ENCODE measurements at regions of chr6 and their contacts with region 1.

Region 1: GRCh38 chr6:131627724-131628682 is at the start of gene MED23:
- DNase-seq: peak; percentile 85 to 98 (median 94)
- ATAC-seq: peak; percentile 99
- H3K4me3 ChIP-seq: peak within 1 kb of the TSS; percentile 92
- H3K4me3 Mint-ChIP-seq: peak within 1 kb of the TSS; percentile 95 to 100 (median 98)
- H3K27ac ChIP-seq: peak within 1 kb of the TSS; percentile 75
- H3K27ac Mint-ChIP-seq: peak within 1 kb of the TSS; percentile 93 to 96 (median 95)
- H3K4me1 ChIP-seq: peaks cover 16 to 18% of the 10 kb centered on the region in 2 donors
- H3K4me1 Mint-ChIP-seq: peaks cover 20 to 51% (median 46%) of the 10 kb centered on the region in 7 donors
- H3K27me3 ChIP-seq: no peaks in the 10 kb centered on the region
- H3K27me3 Mint-ChIP-seq: peaks cover 0 to 2% (median 0%) of the 10 kb centered on the region in 5 donors
- total RNA-seq, gene MED23: 35.7 to 59.1 (median 55.4) TPM

Region 2: GRCh38 chr6:130513770-130514169 is 1114.2 kb before region 1 on chr6:
- CTCF ChIA-PET with region 1: no interaction called
- POLR2A ChIA-PET with region 1: no interaction called
- intact Hi-C with region 1: loop called in 1 of 2 experiments (anchors 5 kb)
- DNase-seq: peak in 8 of 9 donors; percentile 50 to 87 (median 74)
- ATAC-seq: peak; percentile 94
- H3K4me3 ChIP-seq: no peak overlapping the region
- H3K4me3 Mint-ChIP-seq: peak overlapping the region in 9 of 10 donors; percentile 40 to 75 (median 64)
- H3K27ac ChIP-seq: peak overlapping the region; percentile 62
- H3K27ac Mint-ChIP-seq: peak overlapping the region; percentile 77 to 97 (median 87)
- H3K4me1 ChIP-seq: peaks cover 35 to 42% of the 10 kb centered on the region in 2 donors
- H3K4me1 Mint-ChIP-seq: peaks cover 17 to 80% (median 73%) of the 10 kb centered on the region in 7 donors
- H3K27me3 ChIP-seq: no peaks in the 10 kb centered on the region
- H3K27me3 Mint-ChIP-seq: peaks cover 0 to 4% (median 0%) of the 10 kb centered on the region in 5 donors

Region 3: GRCh38 chr6:131116749-131117360 is 511.1 kb before region 1 on chr6:
- CTCF ChIA-PET with region 1: no interaction called
- POLR2A ChIA-PET with region 1: no interaction called
- intact Hi-C with region 1: loop called in 1 of 2 experiments (anchors 1 kb)
- DNase-seq: peak in 6 of 9 donors; percentile 26 to 54 (median 42)
- ATAC-seq: peak; percentile 49
- H3K4me3 ChIP-seq: no peak overlapping the region
- H3K4me3 Mint-ChIP-seq: no peak overlapping the region
- H3K27ac ChIP-seq: no peak overlapping the region
- H3K27ac Mint-ChIP-seq: no peak overlapping the region
- H3K4me1 ChIP-seq: no peaks in the 10 kb centered on the region
- H3K4me1 Mint-ChIP-seq: peaks cover 0 to 2% (median 0%) of the 10 kb centered on the region in 7 donors
- H3K27me3 ChIP-seq: no peaks in the 10 kb centered on the region
- H3K27me3 Mint-ChIP-seq: peaks cover 0 to 8% (median 0%) of the 10 kb centered on the region in 5 donors

Region 4: DNA sequence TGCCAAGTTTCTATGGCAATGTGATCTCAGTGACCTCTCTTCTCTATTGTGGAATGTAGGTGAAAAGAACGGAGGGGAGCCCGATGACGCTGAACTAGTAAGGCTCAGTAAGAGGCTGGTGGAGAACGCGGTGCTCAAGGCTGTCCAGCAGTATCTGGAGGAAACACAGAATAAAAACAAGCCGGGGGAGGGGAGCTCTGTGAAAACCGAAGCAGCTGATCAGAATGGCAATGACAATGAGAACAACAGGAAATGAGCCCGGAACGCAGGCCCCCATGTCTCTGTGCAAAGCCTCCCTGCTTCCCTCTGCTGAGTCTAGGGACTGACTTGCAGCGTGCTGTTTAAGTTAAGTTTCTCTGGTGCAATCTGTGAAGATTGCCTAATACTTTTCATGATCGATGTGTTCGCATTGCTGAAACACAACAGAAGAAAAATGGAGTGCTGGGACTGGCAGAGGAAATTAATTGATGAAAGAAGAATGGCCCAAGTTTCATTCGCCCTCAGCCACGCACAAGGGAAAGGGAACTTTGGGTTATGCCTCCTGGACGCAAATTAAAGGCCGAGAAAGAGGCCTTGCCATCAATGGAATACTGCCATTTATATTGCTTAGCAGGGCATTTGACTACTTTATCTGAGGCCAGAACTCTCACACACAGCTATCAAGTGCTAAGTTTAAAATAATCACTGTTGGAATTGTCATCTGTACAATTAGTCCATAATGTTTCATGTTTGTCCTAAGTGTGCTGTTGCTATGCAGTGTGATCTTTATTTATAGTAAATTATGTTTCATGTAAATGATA is 346.3 kb before region 1 on chr6:
- CTCF ChIA-PET with region 1: interaction called, 9 read pairs
- POLR2A ChIA-PET with region 1: no interaction called
- intact Hi-C with region 1: loop called (anchors 1 to 2 kb)
- DNase-seq: peak; percentile 24 to 89 (median 83)
- ATAC-seq: peak; percentile 95
- H3K4me3 ChIP-seq: peak overlapping the region; percentile 28
- H3K4me3 Mint-ChIP-seq: peak overlapping the region; percentile 75 to 91 (median 83)
- H3K27ac ChIP-seq: peak overlapping the region; percentile 80
- H3K27ac Mint-ChIP-seq: peak overlapping the region; percentile 96 to 99 (median 98)
- H3K4me1 ChIP-seq: peaks cover 17 to 49% of the 10 kb centered on the region in 2 donors
- H3K4me1 Mint-ChIP-seq: peaks cover 22 to 93% (median 82%) of the 10 kb centered on the region in 7 donors
- H3K27me3 ChIP-seq: no peaks in the 10 kb centered on the region
- H3K27me3 Mint-ChIP-seq: no peaks in the 10 kb centered on the region

Region 5: GRCh38 chr6:131532580-131533039 is 95.4 kb before region 1 on chr6:
- CTCF ChIA-PET with region 1: interaction called, 15 read pairs
- POLR2A ChIA-PET with region 1: interaction called, 5 read pairs
- intact Hi-C with region 1: loop called (anchors 1 kb)
- DNase-seq: peak in 1 of 9 donors; percentile 34
- ATAC-seq: peak; percentile 31
- H3K4me3 ChIP-seq: no peak overlapping the region
- H3K4me3 Mint-ChIP-seq: peak overlapping the region in 4 of 10 donors; percentile 7 to 49 (median 24)
- H3K27ac ChIP-seq: peak overlapping the region; percentile 51
- H3K27ac Mint-ChIP-seq: peak overlapping the region; percentile 1 to 94 (median 85)
- H3K4me1 ChIP-seq: peaks cover 4 to 34% of the 10 kb centered on the region in 2 donors
- H3K4me1 Mint-ChIP-seq: peaks cover 31 to 71% (median 62%) of the 10 kb centered on the region in 7 donors
- H3K27me3 ChIP-seq: no peaks in the 10 kb centered on the region
- H3K27me3 Mint-ChIP-seq: peaks cover 0 to 23% (median 4%) of the 10 kb centered on the region in 5 donors

Region 6: GRCh38 chr6:131646249-131646670 is 18.3 kb after region 1 on chr6:
- CTCF ChIA-PET with region 1: no interaction called
- POLR2A ChIA-PET with region 1: no interaction called
- intact Hi-C with region 1: no loop called
- DNase-seq: no peak
- ATAC-seq: no peak
- H3K4me3 ChIP-seq: no peak overlapping the region
- H3K4me3 Mint-ChIP-seq: no peak overlapping the region
- H3K27ac ChIP-seq: no peak overlapping the region
- H3K27ac Mint-ChIP-seq: no peak overlapping the region
- H3K4me1 ChIP-seq: no peaks in the 10 kb centered on the region
- H3K4me1 Mint-ChIP-seq: peaks cover 0 to 6% (median 4%) of the 10 kb centered on the region in 7 donors
- H3K27me3 ChIP-seq: no peaks in the 10 kb centered on the region
- H3K27me3 Mint-ChIP-seq: peaks cover 0 to 5% (median 0%) of the 10 kb centered on the region in 5 donors

Region 7: GRCh38 chr6:132813173-132813856 is 1185.3 kb after region 1 on chr6:
- CTCF ChIA-PET with region 1: no interaction called
- POLR2A ChIA-PET with region 1: no interaction called
- intact Hi-C with region 1: loop called in 1 of 2 experiments (anchors 2 kb)
- DNase-seq: peak in 8 of 9 donors; percentile 31 to 71 (median 62)
- ATAC-seq: no peak
- H3K4me3 ChIP-seq: peak overlapping the region; percentile 90
- H3K4me3 Mint-ChIP-seq: peak overlapping the region; percentile 91 to 100 (median 98)
- H3K27ac ChIP-seq: peak overlapping the region; percentile 80
- H3K27ac Mint-ChIP-seq: peak overlapping the region; percentile 95 to 100 (median 98)
- H3K4me1 ChIP-seq: peaks cover 23 to 26% of the 10 kb centered on the region in 2 donors
- H3K4me1 Mint-ChIP-seq: peaks cover 29 to 54% (median 43%) of the 10 kb centered on the region in 7 donors
- H3K27me3 ChIP-seq: no peaks in the 10 kb centered on the region
- H3K27me3 Mint-ChIP-seq: peaks cover 0 to 30% (median 0%) of the 10 kb centered on the region in 5 donors

Measured in naive thymus-derived CD4-positive, alpha-beta T cell (primary cell).